Vagina (tissue), 2 donors: ENCODE measurements at regions of chr7 and their contacts with region 1.

Region 1: GRCh38 chr7:152025937-152026890 is 740 bp downstream of the GALNT11 start:
- DNase-seq: no peak
- H3K4me3 ChIP-seq: peak overlapping the region; percentile 70 to 75
- H3K27ac ChIP-seq: peak overlapping the region; percentile 91
- H3K4me1 ChIP-seq: peaks cover 27% of the 10 kb centered on the region
- H3K27me3 ChIP-seq: no peaks in the 10 kb centered on the region
- CTCF ChIP-seq: no peak
- POLR2A ChIP-seq: no peak

Region 2: GRCh38 chr7:150820578-150821198 is 1205.5 kb before region 1 on chr7:
- intact Hi-C with region 1: no loop called
- DNase-seq: no peak
- H3K4me3 ChIP-seq: no peak overlapping the region
- H3K27ac ChIP-seq: no peak overlapping the region
- H3K4me1 ChIP-seq: no peaks in the 10 kb centered on the region
- H3K27me3 ChIP-seq: no peaks in the 10 kb centered on the region
- CTCF ChIP-seq: no peak
- POLR2A ChIP-seq: no peak

Region 3: DNA sequence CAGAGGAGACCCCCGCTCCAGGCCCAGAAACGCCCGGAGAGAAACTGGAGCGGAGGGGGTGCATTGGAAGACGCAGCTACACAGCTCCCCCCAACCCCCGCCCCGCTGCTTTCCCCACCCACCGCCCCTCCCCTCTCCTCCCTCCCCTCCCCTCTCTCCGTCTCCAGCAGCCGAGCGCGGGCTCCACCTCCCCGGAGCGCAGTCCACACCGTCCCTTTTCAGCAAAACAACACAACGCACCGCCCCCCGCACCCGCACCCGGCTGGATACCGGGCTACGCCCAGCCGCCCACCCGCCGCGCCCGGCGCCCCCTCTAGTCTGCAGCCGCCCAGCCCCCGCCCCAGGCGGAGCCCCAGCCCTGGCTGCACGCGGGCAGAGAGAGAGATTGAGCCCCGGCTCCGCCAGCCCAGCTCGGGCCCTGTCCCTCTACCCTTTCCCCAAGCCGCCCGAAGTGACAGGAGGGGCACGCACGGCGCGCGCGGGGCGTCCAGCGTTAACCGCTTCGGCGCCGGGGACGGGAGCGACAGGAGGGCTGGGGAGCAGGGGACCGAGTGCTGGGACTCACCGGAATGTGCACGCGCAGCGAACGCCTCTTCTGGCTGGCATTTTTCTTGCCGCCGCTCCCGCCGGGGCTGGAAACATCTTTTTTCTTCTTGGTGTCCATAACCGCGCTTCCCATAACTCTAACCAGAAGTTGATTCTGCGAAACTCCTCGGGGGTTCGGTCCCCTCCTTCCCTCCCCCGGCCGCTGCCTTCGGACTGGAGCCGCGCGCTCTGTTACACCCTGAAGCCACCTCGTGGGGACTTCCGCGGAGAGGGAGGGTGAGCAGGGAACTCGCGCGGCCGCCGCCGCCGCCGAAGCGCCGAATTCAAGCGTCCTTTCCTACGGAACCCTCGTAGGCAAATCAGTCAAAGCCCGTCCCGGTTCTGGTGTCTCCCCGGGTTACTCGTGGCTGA is 150.0 kb before region 1 on chr7:
- intact Hi-C with region 1: loop called (anchors 2 kb)
- DNase-seq: no peak
- H3K4me3 ChIP-seq: peak overlapping the region; percentile 93 to 99
- H3K27ac ChIP-seq: peak overlapping the region; percentile 95
- H3K4me1 ChIP-seq: peaks cover 26% of the 10 kb centered on the region
- H3K27me3 ChIP-seq: no peaks in the 10 kb centered on the region
- CTCF ChIP-seq: no peak
- POLR2A ChIP-seq: peak in 1 of 2 donors; percentile 17

Region 4: GRCh38 chr7:152086513-152086912 is 60.3 kb after region 1 on chr7:
- intact Hi-C with region 1: no loop called
- DNase-seq: no peak
- H3K4me3 ChIP-seq: no peak overlapping the region
- H3K27ac ChIP-seq: no peak overlapping the region
- H3K4me1 ChIP-seq: peaks cover 5% of the 10 kb centered on the region
- H3K27me3 ChIP-seq: no peaks in the 10 kb centered on the region
- CTCF ChIP-seq: no peak
- POLR2A ChIP-seq: no peak